KBM-7 (cell line): ENCODE measurements at regions of chr17 and their contacts with region 1.

Region 1: DNA sequence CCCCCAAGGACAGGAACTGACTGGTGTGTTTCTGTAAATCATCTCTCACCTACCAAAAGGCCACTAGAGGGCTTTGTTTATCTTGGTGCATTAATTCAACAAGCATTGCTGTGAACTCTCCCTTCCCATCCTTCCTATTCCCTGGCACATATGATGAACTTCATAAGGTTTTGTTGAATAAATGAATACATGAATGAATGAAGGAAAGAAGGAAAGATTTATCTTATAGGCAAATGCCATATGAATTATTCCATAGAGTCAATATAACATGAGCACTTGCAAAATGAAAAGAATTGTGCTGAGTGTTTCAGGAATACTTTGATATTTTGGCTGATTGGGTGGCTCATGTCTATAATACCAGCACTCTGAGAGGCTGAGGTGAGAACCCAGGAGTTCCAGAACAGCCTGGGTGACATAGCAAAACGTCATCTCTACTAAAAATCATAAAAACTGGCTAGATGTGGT is 4.3 kb downstream of the SPDYE4 start:
- DNase-seq: peak; percentile 51

Region 2: GRCh38 chr17:8079291-8080207 is 674.5 kb before region 1 on chr17:
- in situ Hi-C with region 1: loop called (anchors 25 kb)
- DNase-seq: peak; percentile 93